PC-9 (cell line): ENCODE measurements at regions of chr2 and their contacts with region 1.

Region 1: DNA sequence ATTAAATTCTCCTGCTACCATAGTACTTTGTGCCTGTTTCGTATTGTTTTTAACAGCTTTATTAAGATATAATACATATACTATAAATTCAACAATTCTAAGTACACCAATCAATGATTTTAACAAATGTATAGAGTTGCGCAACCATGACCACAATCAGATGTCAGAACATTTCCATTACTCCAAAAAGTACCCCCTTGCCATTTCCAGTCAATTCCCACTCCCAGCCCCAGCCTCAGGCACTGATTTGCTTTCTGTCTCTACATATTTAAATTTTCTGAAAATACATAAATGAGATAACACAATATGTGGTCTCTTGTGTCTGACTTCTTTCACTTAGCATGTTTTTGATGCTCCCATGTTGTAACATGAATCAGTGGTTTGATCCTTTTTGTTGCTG is 193.9 kb downstream of the FIGN start:
- DNase-seq: no peak
- H3K4me3 ChIP-seq: no peak overlapping the region
- H3K27ac ChIP-seq: no peak overlapping the region
- H3K4me1 ChIP-seq: no peaks in the 10 kb centered on the region
- H3K27me3 ChIP-seq: no peaks in the 10 kb centered on the region
- CTCF ChIP-seq: no peak

Region 2: DNA sequence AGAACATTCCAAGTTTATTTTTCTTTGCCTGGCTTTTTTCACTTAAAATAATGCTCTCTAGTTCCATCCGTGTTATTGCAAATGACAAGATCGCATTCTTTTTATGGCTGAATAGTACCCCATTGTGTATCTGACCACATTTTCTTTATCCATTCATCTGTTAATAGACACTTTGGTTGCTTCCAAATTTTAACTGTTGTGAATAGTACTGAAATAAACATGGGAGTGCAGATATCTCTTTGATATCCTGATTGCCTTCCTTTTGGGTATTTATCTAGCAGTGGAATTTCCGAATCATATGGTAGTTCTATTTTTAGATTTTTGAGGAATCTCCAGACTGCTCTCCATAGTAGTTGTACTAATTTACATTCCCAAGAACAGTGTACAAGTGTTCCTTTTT is 36.7 kb before region 1 on chr2:
- CTCF ChIA-PET with region 1: no interaction called
- POLR2A ChIA-PET with region 1: no interaction called
- intact Hi-C with region 1: no loop called
- DNase-seq: no peak
- H3K4me3 ChIP-seq: no peak overlapping the region
- H3K27ac ChIP-seq: no peak overlapping the region
- H3K4me1 ChIP-seq: no peaks in the 10 kb centered on the region
- H3K27me3 ChIP-seq: no peaks in the 10 kb centered on the region
- CTCF ChIP-seq: no peak

Region 3: DNA sequence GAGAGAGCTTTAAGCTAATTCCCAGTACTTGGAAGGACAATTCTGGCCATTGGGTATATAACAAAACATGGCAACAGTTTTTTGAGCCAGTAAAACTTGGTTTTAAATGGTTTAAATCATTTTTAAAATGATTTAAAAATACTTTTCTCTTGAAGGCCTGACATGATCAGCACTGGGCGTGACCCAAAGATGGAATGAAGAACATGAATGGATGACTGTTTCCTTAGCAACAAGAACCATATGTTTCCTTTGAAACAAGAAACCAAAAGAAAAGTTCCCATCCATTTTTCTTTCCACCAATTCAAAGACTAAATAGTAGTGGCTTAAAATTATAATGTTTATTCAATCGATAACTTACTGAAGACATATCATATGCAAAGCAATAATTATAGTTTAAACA is 542.1 kb after region 1 on chr2:
- CTCF ChIA-PET with region 1: no interaction called
- POLR2A ChIA-PET with region 1: no interaction called
- intact Hi-C with region 1: no loop called
- DNase-seq: no peak
- H3K4me3 ChIP-seq: no peak overlapping the region
- H3K27ac ChIP-seq: no peak overlapping the region
- H3K4me1 ChIP-seq: no peaks in the 10 kb centered on the region
- H3K27me3 ChIP-seq: no peaks in the 10 kb centered on the region
- CTCF ChIP-seq: no peak

Region 4: DNA sequence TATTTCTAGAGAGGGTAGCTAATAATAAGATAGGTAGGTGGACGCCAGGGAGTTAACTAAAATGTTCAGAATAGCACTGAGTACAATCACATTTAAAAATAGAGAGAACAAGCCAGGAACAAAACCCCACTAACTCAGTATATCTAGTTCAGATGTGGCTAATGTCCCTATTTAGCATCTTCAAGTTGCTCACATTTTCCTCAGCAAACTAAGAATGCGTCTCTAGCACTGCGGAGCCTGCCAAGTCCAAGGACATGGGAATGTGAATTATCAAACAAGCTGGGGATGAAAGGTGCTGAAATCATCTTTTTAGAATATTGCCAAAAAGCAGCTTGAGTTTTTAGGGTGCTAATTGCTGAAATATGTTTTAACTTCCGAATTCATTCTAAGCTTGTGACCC is 592.4 kb after region 1 on chr2:
- CTCF ChIA-PET with region 1: no interaction called
- POLR2A ChIA-PET with region 1: no interaction called
- intact Hi-C with region 1: no loop called
- DNase-seq: no peak
- H3K4me3 ChIP-seq: no peak overlapping the region
- H3K27ac ChIP-seq: no peak overlapping the region
- H3K4me1 ChIP-seq: no peaks in the 10 kb centered on the region
- H3K27me3 ChIP-seq: no peaks in the 10 kb centered on the region
- CTCF ChIP-seq: no peak

Region 5: GRCh38 chr2:164190700-164191099 is 648.8 kb after region 1 on chr2:
- CTCF ChIA-PET with region 1: no interaction called
- POLR2A ChIA-PET with region 1: no interaction called
- intact Hi-C with region 1: no loop called
- DNase-seq: no peak
- H3K4me3 ChIP-seq: no peak overlapping the region
- H3K27ac ChIP-seq: no peak overlapping the region
- H3K4me1 ChIP-seq: no peaks in the 10 kb centered on the region
- H3K27me3 ChIP-seq: no peaks in the 10 kb centered on the region
- CTCF ChIP-seq: no peak

Region 6: DNA sequence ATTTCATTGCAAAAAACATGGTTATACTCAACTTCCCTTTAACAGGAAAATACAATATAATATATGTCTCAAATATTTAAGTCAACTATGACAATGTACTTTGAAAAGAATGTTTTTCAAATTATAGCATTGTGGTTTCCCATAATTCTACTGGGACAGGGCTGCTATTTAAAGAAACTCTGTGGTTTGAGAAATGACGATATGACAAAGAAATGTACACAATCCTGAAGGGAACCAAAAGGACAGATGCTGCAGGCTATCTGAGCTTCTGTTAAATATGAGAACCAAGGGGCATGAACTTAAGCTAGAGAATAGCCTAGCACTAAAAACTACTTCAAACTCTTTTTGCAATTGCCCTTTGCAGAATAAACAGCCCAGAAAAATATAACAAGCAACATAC is 663.4 kb after region 1 on chr2:
- CTCF ChIA-PET with region 1: no interaction called
- POLR2A ChIA-PET with region 1: interaction called, 11 read pairs
- intact Hi-C with region 1: no loop called
- DNase-seq: peak; percentile 12 to 66
- H3K4me3 ChIP-seq: no peak overlapping the region
- H3K27ac ChIP-seq: peak overlapping the region; percentile 48; the same call in 1 of the 2 replicates
- H3K4me1 ChIP-seq: peaks cover 15% of the 10 kb centered on the region
- H3K27me3 ChIP-seq: no peaks in the 10 kb centered on the region
- CTCF ChIP-seq: no peak